Uterus (tissue), 4 donors: ENCODE measurements at regions of chr1 and their contacts with region 1.

Region 1: DNA sequence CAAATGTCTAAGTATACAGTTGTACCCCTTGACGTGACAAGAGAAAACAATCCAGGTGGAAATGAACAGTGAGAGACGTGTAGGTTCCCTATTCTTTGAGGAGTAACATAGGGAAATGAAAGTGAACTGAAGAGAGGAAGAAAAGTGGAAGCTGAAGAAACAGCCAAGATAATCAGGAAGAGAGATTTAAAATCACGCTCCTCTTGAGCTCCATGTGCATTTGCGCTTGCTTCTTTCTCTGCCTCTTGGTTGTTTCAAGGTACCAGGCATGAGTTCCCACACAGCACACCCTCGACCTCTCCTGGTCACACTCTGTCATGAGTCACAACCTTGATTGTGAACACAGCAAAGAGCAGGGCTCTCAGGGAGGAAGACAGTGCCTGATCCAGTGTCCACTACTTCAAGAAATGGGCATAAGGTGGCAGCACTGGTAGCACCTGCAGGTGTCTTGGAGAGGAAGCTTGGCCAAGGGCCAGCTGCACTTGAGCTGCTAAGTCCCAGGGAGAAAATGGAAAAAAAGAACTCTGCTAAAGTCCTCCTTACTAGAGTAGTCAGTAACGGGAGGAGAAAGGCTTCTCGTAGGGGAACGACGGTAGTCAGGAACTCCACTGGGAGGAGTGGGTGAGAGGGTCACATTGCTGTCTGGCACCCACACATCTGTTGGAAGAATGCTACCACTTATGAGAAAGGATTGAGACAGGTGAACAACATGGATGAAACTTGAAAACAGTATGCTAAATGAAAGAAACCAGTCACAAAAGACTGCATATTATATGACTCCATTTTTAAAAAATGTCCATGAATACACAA is 18.3 kb upstream of the ARID1A start:
- DNase-seq: peak; percentile 69 to 84
- H3K4me3 ChIP-seq: peak overlapping the region in 1 of 2 donors; percentile 14
- H3K27ac ChIP-seq: peak overlapping the region; percentile 19 to 45
- H3K4me1 ChIP-seq: peaks cover 0 to 3% of the 10 kb centered on the region in 2 donors
- H3K27me3 ChIP-seq: no peaks in the 10 kb centered on the region
- CTCF ChIP-seq: peak; percentile 53 to 81 (median 74)
- POLR2A ChIP-seq: no peak

Region 2: GRCh38 chr1:26602378-26602959 is 75.0 kb before region 1 on chr1:
- intact Hi-C with region 1: loop called (anchors 10 kb)
- DNase-seq: peak in 1 of 2 donors; percentile 65
- H3K4me3 ChIP-seq: no peak overlapping the region
- H3K27ac ChIP-seq: no peak overlapping the region
- H3K4me1 ChIP-seq: no peaks in the 10 kb centered on the region
- H3K27me3 ChIP-seq: no peaks in the 10 kb centered on the region
- CTCF ChIP-seq: peak; percentile 86 to 98 (median 92)
- POLR2A ChIP-seq: no peak